ENCODE measurements at regions of chr20 and their contacts with region 1.

Region 1: GRCh38 chr20:49594143-49594930 is 26.4 kb upstream of the PTGIS start:
- DNase-seq: peak; percentile 94
- ATAC-seq: peak; percentile 57
- H3K4me3 Mint-ChIP-seq: peak overlapping the region; percentile 85
- H3K27ac Mint-ChIP-seq: peak overlapping the region; percentile 96
- H3K4me1 Mint-ChIP-seq: peaks cover 85% of the 10 kb centered on the region
- H3K27me3 Mint-ChIP-seq: no peaks in the 10 kb centered on the region
- CTCF ChIP-seq: no peak

Region 2: DNA sequence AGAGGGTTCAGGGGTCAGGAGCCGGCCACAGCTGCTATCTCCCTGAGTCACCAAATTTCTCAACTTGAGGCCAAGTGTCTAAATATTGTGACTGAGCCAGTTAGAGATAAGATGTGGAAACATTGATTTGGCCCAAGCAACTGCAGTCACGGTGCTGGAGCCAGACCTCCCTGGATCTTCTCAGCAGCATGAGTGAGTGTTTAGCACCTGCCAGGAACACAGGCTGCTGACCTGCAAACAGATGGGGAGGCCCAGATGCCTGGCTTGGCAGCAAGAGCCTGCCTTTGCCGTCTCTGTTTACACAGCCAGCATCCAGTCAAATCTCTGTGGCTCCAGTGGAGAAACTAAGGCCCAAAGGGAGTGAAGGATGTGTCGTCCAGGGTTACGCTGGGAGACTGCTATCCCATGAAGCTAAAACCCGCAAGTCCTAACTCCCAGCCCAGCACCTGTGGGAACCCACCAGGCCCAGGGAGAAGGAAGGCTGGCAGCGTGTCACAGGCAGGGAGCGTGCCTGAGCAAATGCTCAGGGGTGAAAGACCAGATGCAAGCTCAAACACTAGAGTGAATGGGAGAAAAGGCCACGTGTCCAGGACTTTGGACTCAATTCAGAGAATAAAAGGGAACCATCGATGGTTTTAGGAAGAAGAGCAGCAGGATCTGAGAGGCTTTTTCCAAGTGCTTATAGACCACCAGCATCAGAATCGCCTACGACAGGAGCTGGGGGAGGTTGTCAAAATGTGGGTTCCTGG is 10.5 kb before region 1 on chr20:
- CTCF ChIA-PET with region 1: interaction called, 4 read pairs
- POLR2A ChIA-PET with region 1: interaction called, 16 read pairs
- intact Hi-C with region 1: no loop called
- DNase-seq: no peak
- ATAC-seq: peak; percentile 52
- H3K4me3 Mint-ChIP-seq: no peak overlapping the region
- H3K27ac Mint-ChIP-seq: no peak overlapping the region
- H3K4me1 Mint-ChIP-seq: peaks cover 9% of the 10 kb centered on the region
- H3K27me3 Mint-ChIP-seq: peaks cover 22% of the 10 kb centered on the region
- CTCF ChIP-seq: no peak

Region 3: GRCh38 chr20:49768204-49769047 is 174.1 kb after region 1 on chr20:
- CTCF ChIA-PET with region 1: no interaction called
- POLR2A ChIA-PET with region 1: no interaction called
- intact Hi-C with region 1: no loop called
- DNase-seq: peak; percentile 27
- ATAC-seq: no peak
- H3K4me3 Mint-ChIP-seq: no peak overlapping the region
- H3K27ac Mint-ChIP-seq: no peak overlapping the region
- H3K4me1 Mint-ChIP-seq: peaks cover 14% of the 10 kb centered on the region
- H3K27me3 Mint-ChIP-seq: peaks cover 53% of the 10 kb centered on the region
- CTCF ChIP-seq: no peak